Natural killer cell (primary cell): ENCODE measurements at regions of chr7 and their contacts with region 1.

Region 1: DNA sequence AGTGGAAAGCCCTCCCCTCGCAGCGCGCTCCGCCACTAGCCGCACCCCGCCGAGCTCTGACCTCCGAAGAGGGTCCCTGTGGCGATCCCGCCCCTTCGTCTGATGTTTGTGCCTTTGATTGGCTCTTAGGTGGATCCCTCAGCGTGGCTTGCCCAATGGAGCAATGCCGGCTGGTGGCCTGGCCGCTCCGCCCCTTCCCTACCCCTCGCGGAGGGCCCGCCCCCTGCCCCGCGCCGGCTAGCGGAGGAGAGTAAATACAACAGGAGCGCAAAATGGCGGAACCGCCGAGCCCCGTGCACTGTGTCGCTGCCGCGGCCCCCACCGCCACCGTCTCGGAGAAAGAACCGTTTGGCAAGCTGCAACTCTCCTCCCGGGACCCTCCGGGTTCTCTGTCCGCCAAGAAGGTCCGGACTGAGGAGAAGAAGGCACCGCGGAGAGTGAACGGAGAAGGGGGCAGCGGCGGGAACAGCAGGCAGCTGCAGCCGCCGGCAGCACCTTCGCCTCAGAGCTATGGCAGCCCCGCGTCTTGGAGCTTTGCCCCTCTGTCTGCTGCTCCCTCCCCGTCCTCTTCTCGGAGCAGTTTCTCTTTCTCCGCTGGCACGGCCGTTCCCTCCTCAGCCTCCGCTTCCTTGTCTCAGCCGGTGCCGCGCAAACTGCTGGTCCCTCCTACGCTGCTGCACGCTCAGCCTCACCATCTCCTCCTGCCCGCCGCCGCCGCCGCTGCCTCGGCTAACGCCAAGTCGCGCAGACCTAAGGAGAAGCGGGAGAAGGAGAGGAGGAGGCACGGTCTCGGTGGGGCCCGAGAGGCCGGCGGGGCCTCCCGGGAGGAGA is at the start of gene RSBN1L:
- DNase-seq: peak; percentile 97 to 99
- ATAC-seq: peak; percentile 93 to 99 (median 95)
- H3K4me3 ChIP-seq: peak within 1 kb of the TSS; percentile 84
- H3K4me3 Mint-ChIP-seq: peak within 1 kb of the TSS; percentile 99
- H3K27ac ChIP-seq: peak within 1 kb of the TSS; percentile 85
- H3K27ac Mint-ChIP-seq: peak within 1 kb of the TSS; percentile 96 to 97
- H3K4me1 ChIP-seq: peaks cover 15% of the 10 kb centered on the region
- H3K4me1 Mint-ChIP-seq: peaks cover 55 to 57% of the 10 kb centered on the region in 2 donors
- H3K27me3 ChIP-seq: no peaks in the 10 kb centered on the region
- H3K27me3 Mint-ChIP-seq: no peaks in the 10 kb centered on the region
- CTCF ChIP-seq: peak; percentile 53
- total RNA-seq, gene RSBN1L: 23.9 to 34.4 (median 33.4) TPM

Region 2: DNA sequence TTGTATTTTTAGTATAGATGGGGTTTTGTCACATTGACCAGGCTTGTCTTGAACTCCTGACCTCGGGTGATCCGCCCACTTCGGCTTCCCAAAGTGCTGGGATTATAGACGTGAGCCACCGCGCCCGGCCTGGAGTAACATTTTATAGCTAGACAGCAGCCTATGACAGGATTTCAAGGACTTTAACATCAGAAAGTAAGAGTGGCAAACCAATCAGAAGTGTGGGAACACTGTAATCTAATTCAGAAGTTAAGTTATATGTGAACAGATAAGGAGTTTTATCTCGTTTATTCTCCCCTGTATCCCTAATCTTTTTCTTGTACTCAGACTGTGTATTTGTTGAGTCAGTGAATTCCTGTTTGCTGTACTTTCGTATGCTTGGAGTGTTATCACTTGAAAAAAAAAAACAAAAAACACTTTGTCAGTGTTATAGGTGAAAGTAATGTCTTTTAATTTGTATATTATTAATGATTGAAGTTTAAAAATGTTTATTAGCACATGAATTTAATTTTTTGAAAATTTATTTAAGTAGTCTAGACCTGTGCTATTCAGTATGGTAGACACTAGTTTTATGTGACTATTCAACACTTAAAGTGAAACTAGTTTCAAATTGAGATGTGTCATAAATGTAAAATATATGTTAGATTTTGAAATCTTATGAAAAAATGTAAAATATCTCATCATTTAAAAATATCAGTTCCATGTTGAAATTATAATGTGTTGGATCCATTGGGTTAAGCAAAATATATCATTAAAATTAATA is 38.4 kb after region 1 on chr7:
- intact Hi-C with region 1: loop called (anchors 5 kb)
- DNase-seq: no peak
- ATAC-seq: peak in 2 of 3 donors; percentile 57 to 71
- H3K4me3 ChIP-seq: no peak overlapping the region
- H3K4me3 Mint-ChIP-seq: no peak overlapping the region
- H3K27ac ChIP-seq: no peak overlapping the region
- H3K27ac Mint-ChIP-seq: peak overlapping the region; percentile 66 to 73
- H3K4me1 ChIP-seq: peaks cover 8% of the 10 kb centered on the region
- H3K4me1 Mint-ChIP-seq: peaks cover 40 to 41% of the 10 kb centered on the region in 2 donors
- H3K27me3 ChIP-seq: no peaks in the 10 kb centered on the region
- H3K27me3 Mint-ChIP-seq: no peaks in the 10 kb centered on the region
- CTCF ChIP-seq: no peak

Region 3: DNA sequence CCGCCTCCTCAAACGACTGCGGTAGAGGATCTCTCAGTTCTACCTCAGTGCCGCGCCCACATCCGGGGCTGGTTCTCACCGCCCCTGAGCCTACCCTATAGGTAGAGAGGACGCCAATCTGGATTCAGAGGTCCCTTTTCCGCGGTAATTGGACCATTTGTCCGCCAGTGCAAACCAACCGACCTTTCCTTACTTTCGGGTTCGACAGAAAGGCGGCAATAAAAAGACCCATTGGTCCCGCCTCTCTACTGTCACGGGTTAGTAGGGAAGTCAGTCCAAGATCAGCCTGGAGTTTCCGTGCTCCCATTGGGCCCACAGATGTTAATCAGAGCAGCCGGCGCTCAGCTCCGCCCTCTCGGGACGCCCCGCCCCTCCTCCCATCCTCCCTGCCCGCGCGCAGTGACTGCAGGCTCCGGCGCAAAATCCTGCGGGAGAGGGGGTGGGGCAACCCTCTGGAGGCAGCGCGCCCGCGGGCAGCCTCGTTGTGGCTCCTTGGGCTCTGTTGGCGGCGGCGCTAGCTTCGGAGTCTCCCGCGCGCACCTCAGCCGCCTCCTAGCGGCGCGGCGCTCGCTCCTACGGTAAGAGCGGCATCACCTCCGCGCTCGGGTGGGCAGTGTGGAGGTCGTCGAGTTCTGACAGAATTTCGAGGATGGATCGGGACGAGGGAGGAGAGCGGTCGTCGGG is 102.1 kb after region 1 on chr7 and contains the starts of genes PHTF2 and TMEM60:
- intact Hi-C with region 1: loop called (anchors 2 kb)
- DNase-seq: peak; percentile 89 to 98
- ATAC-seq: peak; percentile 88 to 97 (median 91)
- H3K4me3 ChIP-seq: peak within 1 kb of the TSS; percentile 88
- H3K4me3 Mint-ChIP-seq: peak within 1 kb of the TSS; percentile 98
- H3K27ac ChIP-seq: peak within 1 kb of the TSS; percentile 65
- H3K27ac Mint-ChIP-seq: peak within 1 kb of the TSS; percentile 92 to 96
- H3K4me1 ChIP-seq: peaks cover 16% of the 10 kb centered on the region
- H3K4me1 Mint-ChIP-seq: peaks cover 63 to 76% of the 10 kb centered on the region in 2 donors
- H3K27me3 ChIP-seq: no peaks in the 10 kb centered on the region
- H3K27me3 Mint-ChIP-seq: no peaks in the 10 kb centered on the region
- CTCF ChIP-seq: peak; percentile 59
- total RNA-seq, gene PHTF2: 23.1 to 26.9 (median 26.4) TPM
- total RNA-seq, gene TMEM60: 3.4 to 5.2 (median 3.9) TPM